WTC11 (cell line): ENCODE measurements at regions of chr18 and their contacts with region 1.

Region 1: DNA sequence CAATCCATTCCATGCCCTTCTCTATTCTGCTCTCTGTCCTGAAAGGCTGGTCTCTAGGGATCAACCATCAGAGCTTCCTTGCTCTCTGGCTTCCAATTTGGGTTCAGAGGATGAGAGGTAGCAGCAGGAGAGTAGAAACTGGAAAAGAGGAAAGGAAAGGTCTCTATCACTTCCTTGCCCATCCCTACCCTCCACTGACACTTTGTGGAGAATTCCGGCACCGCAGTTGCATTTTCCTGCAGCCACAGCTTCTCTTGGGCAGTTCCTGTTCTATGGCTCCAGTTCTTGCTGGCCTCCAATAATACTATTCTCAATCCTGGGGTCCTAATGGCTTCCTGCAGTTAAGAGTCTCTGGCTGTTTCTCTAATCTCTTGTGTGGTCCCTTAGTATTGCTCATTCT is 13.3 kb upstream of the IMPACT start:
- DNase-seq: peak; percentile 58
- ATAC-seq: peak; percentile 85
- H3K4me3 Mint-ChIP-seq: no peak overlapping the region
- H3K27ac Mint-ChIP-seq: no peak overlapping the region
- H3K4me1 Mint-ChIP-seq: peaks cover 19% of the 10 kb centered on the region
- H3K27me3 Mint-ChIP-seq: peaks cover 9% of the 10 kb centered on the region
- CTCF ChIP-seq: no peak

Region 2: GRCh38 chr18:24380163-24380747 is 32.9 kb before region 1 on chr18:
- CTCF ChIA-PET with region 1: interaction called, 7 read pairs
- POLR2A ChIA-PET with region 1: interaction called, 10 read pairs
- DNase-seq: no peak
- ATAC-seq: peak; percentile 49
- H3K4me3 Mint-ChIP-seq: no peak overlapping the region
- H3K27ac Mint-ChIP-seq: peak overlapping the region; percentile 96
- H3K4me1 Mint-ChIP-seq: peaks cover 50% of the 10 kb centered on the region
- H3K27me3 Mint-ChIP-seq: no peaks in the 10 kb centered on the region
- CTCF ChIP-seq: no peak

Region 3: DNA sequence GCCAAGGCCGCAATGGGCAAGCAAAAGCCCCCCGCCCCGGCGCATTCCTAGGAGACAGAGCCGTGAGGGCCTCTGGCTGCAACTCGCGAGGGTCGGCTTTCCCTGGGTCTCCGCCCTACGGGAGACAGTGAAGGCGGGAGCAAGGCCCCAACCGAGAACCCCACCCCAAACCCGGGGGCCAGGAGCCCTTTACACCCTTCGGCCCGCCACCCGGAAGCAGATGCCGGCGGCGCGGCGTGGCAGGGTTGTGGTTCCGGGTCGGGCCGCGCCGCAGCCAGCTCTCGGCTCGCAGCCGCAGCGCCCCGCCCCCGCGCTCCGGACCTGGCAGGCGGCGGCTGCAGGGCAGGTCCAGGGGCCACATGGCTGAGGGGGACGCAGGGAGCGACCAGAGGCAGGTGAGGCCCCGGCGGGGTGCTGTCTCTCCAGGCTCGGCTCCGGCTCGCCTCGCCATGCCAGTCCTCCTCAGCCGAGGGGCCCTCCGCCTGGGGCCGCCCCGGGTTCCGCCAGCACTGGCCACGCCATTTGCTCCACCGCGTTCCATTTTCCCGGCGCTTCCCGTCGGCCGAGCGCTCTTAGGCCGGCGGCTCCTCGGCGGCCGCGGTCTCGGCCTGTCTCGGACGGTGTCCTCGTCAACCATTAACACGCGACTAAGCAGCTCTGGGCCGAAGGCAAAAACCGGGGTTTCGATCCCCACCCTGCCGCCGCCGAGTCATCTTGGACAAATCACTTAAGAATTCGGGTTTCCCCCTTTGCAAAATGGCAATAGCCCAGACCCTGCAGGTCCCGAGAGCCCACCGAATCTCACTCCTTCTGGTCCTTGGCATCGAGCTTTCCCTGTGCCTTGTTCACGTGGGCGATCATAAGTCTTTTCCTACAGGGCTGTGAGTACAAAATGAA is 13.5 kb after region 1 on chr18 and contains the start of gene IMPACT:
- CTCF ChIA-PET with region 1: interaction called, 13 read pairs
- POLR2A ChIA-PET with region 1: interaction called, 3 read pairs
- DNase-seq: peak; percentile 87
- ATAC-seq: peak; percentile 93
- H3K4me3 Mint-ChIP-seq: peak within 1 kb of the TSS; percentile 93
- H3K27ac Mint-ChIP-seq: peak within 1 kb of the TSS; percentile 100
- H3K4me1 Mint-ChIP-seq: peaks cover 21% of the 10 kb centered on the region
- H3K27me3 Mint-ChIP-seq: peaks cover 8% of the 10 kb centered on the region
- CTCF ChIP-seq: no peak
- total RNA-seq, gene IMPACT: 48.0 to 48.8 TPM (median 48.3 TPM) in 3 replicates